Heart right ventricle (tissue), 16 donors: ENCODE measurements at regions of chr1 and their contacts with region 1.

Region 1: DNA sequence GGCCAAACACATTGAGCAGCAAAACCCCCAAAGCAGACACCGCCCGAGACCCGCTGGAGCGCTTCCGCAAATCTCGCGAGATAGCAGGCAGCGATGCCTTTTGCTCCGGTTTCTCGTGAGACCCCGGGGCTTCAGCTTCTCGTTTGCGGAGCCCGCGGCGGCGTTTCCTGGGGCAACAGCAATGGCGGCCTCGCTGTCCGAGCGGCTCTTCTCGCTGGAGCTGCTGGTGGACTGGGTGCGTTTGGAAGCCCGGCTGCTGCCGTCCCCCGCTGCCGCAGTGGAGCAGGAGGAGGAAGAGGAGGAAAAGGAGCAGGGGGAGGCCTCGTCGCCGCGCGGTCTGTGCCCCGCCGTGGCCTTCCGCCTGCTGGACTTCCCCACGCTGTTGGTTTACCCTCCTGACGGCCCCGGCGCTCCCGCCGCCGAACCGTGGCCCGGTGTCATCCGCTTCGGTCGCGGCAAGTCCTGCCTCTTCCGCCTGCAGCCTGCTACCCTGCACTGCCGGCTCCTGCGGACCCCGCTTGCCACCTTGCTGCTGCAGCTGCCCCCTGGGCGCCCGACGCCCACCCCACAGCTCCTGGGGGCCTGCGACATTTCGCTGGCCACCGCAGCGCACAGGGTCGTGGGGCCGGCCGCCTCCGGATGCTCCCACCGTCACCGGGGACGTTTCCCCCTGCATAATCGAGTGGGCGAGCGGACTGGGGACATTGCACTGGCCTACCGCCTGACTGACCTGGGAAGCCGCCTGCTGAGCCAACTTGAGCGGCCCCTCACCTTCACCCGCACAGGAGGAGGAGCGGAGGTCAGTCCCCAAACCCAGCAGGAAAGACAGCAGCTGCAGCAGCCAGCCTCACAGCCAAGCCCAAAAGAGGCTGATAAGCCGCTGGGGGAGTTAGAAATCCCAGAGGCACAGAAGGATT is at the start of gene MAP10:
- DNase-seq: peak; percentile 79 to 83
- ATAC-seq: peak; percentile 86 to 93 (median 90)
- H3K4me3 ChIP-seq: peak within 1 kb of the TSS; percentile 69 to 87 (median 78)
- H3K27ac ChIP-seq: peak within 1 kb of the TSS; percentile 81 to 98 (median 94)
- H3K4me1 ChIP-seq: peaks cover 0 to 57% (median 51%) of the 10 kb centered on the region in 9 donors
- H3K27me3 ChIP-seq: no peaks in the 10 kb centered on the region
- CTCF ChIP-seq: no peak
- total RNA-seq, gene MAP10: 2.5 to 4.8 (median 3.9) TPM

Region 2: GRCh38 chr1:232643251-232643650 is 162.3 kb before region 1 on chr1:
- intact Hi-C with region 1: loop called in 5 of 10 experiments (anchors 10 kb)
- DNase-seq: no peak
- ATAC-seq: no peak
- H3K4me3 ChIP-seq: no peak overlapping the region
- H3K27ac ChIP-seq: no peak overlapping the region
- H3K4me1 ChIP-seq: no peaks in the 10 kb centered on the region
- H3K27me3 ChIP-seq: no peaks in the 10 kb centered on the region
- CTCF ChIP-seq: peak in 3 of 9 donors; percentile 3 to 14 (median 13)

Region 3: DNA sequence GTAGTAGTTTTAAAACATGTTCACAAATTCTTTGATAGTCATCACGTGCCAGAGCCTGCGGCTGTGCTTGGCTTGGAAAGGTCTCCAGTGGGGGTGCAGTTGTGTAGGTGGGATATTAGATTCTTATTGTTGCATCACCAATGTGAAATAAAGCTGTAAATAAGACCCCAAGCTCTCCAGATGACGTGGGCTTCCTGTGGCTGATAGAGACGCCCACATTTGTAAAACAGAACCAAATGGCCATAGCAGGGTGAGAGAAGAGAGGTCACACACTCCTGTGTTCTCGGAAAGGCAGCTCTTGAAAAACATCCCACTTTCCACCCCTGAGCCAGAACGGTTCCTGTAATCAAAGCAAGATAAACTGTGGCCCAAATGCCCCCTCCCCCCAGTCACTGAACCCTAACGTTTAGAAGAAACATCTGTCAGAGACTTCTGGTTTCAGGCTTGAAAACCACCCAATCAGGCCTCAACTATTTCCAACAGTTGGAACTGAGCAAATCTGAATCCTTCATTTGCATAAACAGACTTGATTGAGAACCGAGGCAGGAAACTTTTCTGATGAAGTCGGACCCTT is 138.2 kb after region 1 on chr1:
- intact Hi-C with region 1: loop called in 1 of 10 experiments (anchors 10 kb)
- DNase-seq: no peak
- ATAC-seq: peak in 1 of 8 donors; percentile 25
- H3K4me3 ChIP-seq: no peak overlapping the region
- H3K27ac ChIP-seq: no peak overlapping the region
- H3K4me1 ChIP-seq: peaks cover 0 to 14% (median 4%) of the 10 kb centered on the region in 9 donors
- H3K27me3 ChIP-seq: peaks cover 0 to 2% (median 0%) of the 10 kb centered on the region in 7 donors
- CTCF ChIP-seq: no peak

Region 4: GRCh38 chr1:232968965-232969364 is 163.4 kb after region 1 on chr1:
- intact Hi-C with region 1: no loop called
- DNase-seq: peak; percentile 41 to 46
- ATAC-seq: peak; percentile 70 to 94 (median 80)
- H3K4me3 ChIP-seq: no peak overlapping the region
- H3K27ac ChIP-seq: peak overlapping the region in 2 of 10 donors; percentile 15 to 24
- H3K4me1 ChIP-seq: peaks cover 3 to 53% (median 22%) of the 10 kb centered on the region in 9 donors
- H3K27me3 ChIP-seq: no peaks in the 10 kb centered on the region
- CTCF ChIP-seq: no peak